ENCODE measurements at regions of chr2 and their contacts with region 1.

Region 1: GRCh38 chr2:134245340-134245984 is 8.4 kb upstream of the MGAT5 start:
- DNase-seq: peak; percentile 68 to 81
- H3K4me3 ChIP-seq: no peak overlapping the region
- H3K4me3 Mint-ChIP-seq: no peak overlapping the region
- H3K27ac Mint-ChIP-seq: no peak overlapping the region
- H3K4me1 ChIP-seq: no peaks in the 10 kb centered on the region
- H3K4me1 Mint-ChIP-seq: peaks cover 7% of the 10 kb centered on the region
- H3K27me3 ChIP-seq: no peaks in the 10 kb centered on the region
- H3K27me3 Mint-ChIP-seq: no peaks in the 10 kb centered on the region
- CTCF ChIP-seq: peak; percentile 78 to 85

Region 2: DNA sequence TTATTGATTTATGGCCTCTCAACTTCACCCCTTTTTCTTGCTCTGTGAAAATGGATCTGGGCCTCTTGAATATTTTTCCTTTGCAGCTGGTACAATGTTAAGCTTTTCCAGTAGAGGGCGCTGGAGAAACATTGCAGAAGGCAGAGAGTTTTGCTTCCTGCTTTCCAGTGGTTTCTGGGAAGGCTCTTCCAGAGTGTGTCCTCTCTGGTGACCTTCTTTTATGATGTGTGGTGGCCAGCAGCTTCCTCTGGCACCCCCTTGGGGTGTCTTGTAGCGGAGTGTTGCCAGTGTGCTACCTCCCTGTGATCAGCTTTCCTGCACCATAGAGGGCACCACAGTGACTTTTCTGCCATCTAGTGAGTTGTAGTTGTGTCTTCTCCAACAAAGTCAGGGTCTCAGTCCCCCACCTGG is 17.0 kb before region 1 on chr2:
- CTCF ChIA-PET with region 1: interaction called, 4 read pairs
- POLR2A ChIA-PET with region 1: no interaction called
- intact Hi-C with region 1: loop called (anchors 1 kb)
- DNase-seq: peak; percentile 36 to 53
- H3K4me3 ChIP-seq: no peak overlapping the region
- H3K4me3 Mint-ChIP-seq: no peak overlapping the region
- H3K27ac Mint-ChIP-seq: no peak overlapping the region
- H3K4me1 ChIP-seq: no peaks in the 10 kb centered on the region
- H3K4me1 Mint-ChIP-seq: no peaks in the 10 kb centered on the region
- H3K27me3 ChIP-seq: no peaks in the 10 kb centered on the region
- H3K27me3 Mint-ChIP-seq: no peaks in the 10 kb centered on the region
- CTCF ChIP-seq: peak; percentile 60 to 64

Region 3: GRCh38 chr2:134301099-134301927 is 55.9 kb after region 1 on chr2:
- CTCF ChIA-PET with region 1: no interaction called
- POLR2A ChIA-PET with region 1: no interaction called
- intact Hi-C with region 1: no loop called
- DNase-seq: no peak
- H3K4me3 ChIP-seq: no peak overlapping the region
- H3K4me3 Mint-ChIP-seq: no peak overlapping the region
- H3K27ac Mint-ChIP-seq: no peak overlapping the region
- H3K4me1 ChIP-seq: no peaks in the 10 kb centered on the region
- H3K4me1 Mint-ChIP-seq: no peaks in the 10 kb centered on the region
- H3K27me3 ChIP-seq: no peaks in the 10 kb centered on the region
- H3K27me3 Mint-ChIP-seq: no peaks in the 10 kb centered on the region
- CTCF ChIP-seq: no peak

Region 4: GRCh38 chr2:134314681-134315368 is 69.4 kb after region 1 on chr2:
- CTCF ChIA-PET with region 1: no interaction called
- POLR2A ChIA-PET with region 1: no interaction called
- intact Hi-C with region 1: no loop called
- DNase-seq: no peak
- H3K4me3 ChIP-seq: no peak overlapping the region
- H3K4me3 Mint-ChIP-seq: no peak overlapping the region
- H3K27ac Mint-ChIP-seq: no peak overlapping the region
- H3K4me1 ChIP-seq: no peaks in the 10 kb centered on the region
- H3K4me1 Mint-ChIP-seq: no peaks in the 10 kb centered on the region
- H3K27me3 ChIP-seq: no peaks in the 10 kb centered on the region
- H3K27me3 Mint-ChIP-seq: no peaks in the 10 kb centered on the region
- CTCF ChIP-seq: peak in 1 of 2 experiments; percentile 8